Heart left ventricle (tissue), 16 donors: ENCODE measurements at regions of chr4 and their contacts with region 1.

Region 1: DNA sequence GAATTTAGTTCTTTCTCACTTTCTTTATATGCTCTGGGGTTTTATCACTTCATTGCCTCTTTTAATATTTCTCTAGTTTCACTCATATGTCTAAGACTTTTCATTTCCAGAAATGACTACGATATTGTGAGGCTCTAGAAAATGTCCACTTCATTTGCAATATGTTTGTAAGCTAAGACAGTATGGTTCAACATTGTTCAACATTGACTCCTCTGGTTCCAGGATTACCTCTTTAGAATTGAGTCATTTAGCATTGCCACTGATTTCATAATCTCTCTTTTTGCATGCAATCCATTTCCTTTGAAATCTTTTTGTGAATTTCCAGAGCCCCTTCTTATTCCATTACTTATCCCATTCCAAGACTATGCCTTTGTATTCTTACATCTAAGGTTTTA is 32.3 kb downstream of the BBS12 start:
- DNase-seq: no peak
- ATAC-seq: no peak
- H3K4me3 ChIP-seq: no peak overlapping the region
- H3K27ac ChIP-seq: no peak overlapping the region
- H3K4me1 ChIP-seq: peaks cover 0 to 24% (median 6%) of the 10 kb centered on the region in 12 donors
- H3K27me3 ChIP-seq: no peaks in the 10 kb centered on the region
- CTCF ChIP-seq: no peak
- POLR2A ChIP-seq: no peak

Region 2: DNA sequence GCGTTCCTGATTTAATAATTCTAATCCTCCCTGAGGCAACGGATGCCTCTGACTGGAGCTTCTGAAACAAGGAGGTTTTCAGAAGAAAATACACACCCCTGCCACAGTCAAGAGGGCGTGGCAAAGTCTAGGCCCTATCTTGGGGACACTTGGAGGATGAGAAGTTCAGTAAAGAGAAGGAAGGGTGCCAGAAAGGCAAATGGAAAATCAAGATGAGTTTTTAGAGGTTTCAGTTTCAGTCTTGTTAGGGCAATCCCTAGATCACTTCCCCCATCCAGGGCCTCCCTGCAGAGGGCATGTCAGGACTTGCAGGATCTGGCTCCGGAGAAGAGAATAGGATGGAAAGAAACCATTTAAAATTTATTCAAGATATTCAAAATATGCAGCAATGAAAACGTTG is 33.3 kb after region 1 on chr4:
- intact Hi-C with region 1: loop called in 1 of 10 experiments (anchors 5 kb)
- DNase-seq: peak in 4 of 5 donors; percentile 52 to 58 (median 56)
- ATAC-seq: peak; percentile 62 to 96 (median 76)
- H3K4me3 ChIP-seq: peak overlapping the region in 7 of 12 donors; percentile 6 to 40 (median 19)
- H3K27ac ChIP-seq: peak overlapping the region; percentile 8 to 78 (median 68)
- H3K4me1 ChIP-seq: peaks cover 0 to 23% (median 14%) of the 10 kb centered on the region in 12 donors
- H3K27me3 ChIP-seq: no peaks in the 10 kb centered on the region
- CTCF ChIP-seq: peak in 2 of 12 donors; percentile 27 to 34
- POLR2A ChIP-seq: no peak